Heart left ventricle (tissue), 16 donors: ENCODE measurements at regions of chr12 and their contacts with region 1.

Region 1: DNA sequence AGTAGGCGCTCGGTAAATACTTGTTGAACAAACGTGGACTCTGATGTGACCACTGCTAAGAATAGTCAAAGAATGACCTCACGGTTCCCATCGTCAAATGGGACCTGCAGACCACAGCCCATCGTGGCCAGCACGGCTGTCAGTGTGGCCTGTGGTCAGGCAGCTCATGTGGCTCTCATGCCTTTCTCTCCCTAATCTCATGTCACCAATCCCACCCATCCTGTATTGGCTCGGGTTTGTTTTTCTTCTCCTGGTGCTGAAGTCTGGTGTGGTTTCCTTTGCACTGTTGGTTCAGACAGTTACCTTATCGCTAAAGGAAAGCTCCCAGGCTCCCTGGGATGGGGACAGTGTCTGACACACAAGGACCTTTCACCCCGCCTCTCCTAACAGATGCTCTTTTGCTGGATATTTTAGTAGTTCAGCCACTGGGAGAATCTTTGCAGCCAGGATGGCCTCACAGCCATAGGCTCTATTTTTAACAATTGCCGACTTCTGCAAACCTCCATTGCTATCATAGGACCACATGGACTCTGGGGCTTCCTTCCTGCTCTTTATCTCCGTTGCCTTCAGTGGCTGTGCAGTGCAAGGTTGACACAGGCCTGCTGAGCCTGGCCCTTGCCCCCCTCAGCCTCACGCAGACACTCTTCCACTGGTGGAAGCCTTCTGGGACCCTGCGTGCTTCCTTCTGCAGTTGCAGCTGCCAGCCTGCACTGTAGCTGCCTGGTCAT is 293.1 kb upstream of the FKBP4 start:
- DNase-seq: peak in 4 of 5 donors; percentile 52 to 70 (median 62)
- ATAC-seq: peak; percentile 63 to 83 (median 68)
- H3K4me3 ChIP-seq: no peak overlapping the region
- H3K27ac ChIP-seq: peak overlapping the region; percentile 18 to 93 (median 80)
- H3K4me1 ChIP-seq: peaks cover 10 to 63% (median 43%) of the 10 kb centered on the region in 12 donors
- H3K27me3 ChIP-seq: no peaks in the 10 kb centered on the region
- CTCF ChIP-seq: no peak
- POLR2A ChIP-seq: no peak

Region 2: GRCh38 chr12:2324387-2324786 is 177.2 kb before region 1 on chr12:
- intact Hi-C with region 1: loop called in 2 of 10 experiments (anchors 10 kb)
- DNase-seq: peak in 1 of 5 donors; percentile 36
- ATAC-seq: peak in 3 of 4 donors; percentile 10 to 20 (median 19)
- H3K4me3 ChIP-seq: no peak overlapping the region
- H3K27ac ChIP-seq: peak overlapping the region in 11 of 12 donors; percentile 46 to 86 (median 69)
- H3K4me1 ChIP-seq: peaks cover 8 to 79% (median 59%) of the 10 kb centered on the region in 12 donors
- H3K27me3 ChIP-seq: no peaks in the 10 kb centered on the region
- CTCF ChIP-seq: no peak
- POLR2A ChIP-seq: no peak

Region 3: GRCh38 chr12:2395354-2395977 is 106.2 kb before region 1 on chr12:
- intact Hi-C with region 1: loop called in 1 of 10 experiments (anchors 10 kb)
- DNase-seq: peak in 4 of 5 donors; percentile 42 to 73 (median 50)
- ATAC-seq: no peak
- H3K4me3 ChIP-seq: no peak overlapping the region
- H3K27ac ChIP-seq: peak overlapping the region in 11 of 12 donors; percentile 12 to 77 (median 47)
- H3K4me1 ChIP-seq: peaks cover 3 to 65% (median 30%) of the 10 kb centered on the region in 12 donors
- H3K27me3 ChIP-seq: no peaks in the 10 kb centered on the region
- CTCF ChIP-seq: peak; percentile 65 to 86 (median 78)
- POLR2A ChIP-seq: no peak

Region 4: GRCh38 chr12:2451025-2451424 is 50.6 kb before region 1 on chr12:
- intact Hi-C with region 1: loop called in 1 of 10 experiments (anchors 5 kb)
- DNase-seq: no peak
- ATAC-seq: no peak
- H3K4me3 ChIP-seq: peak overlapping the region in 1 of 12 donors; percentile 36
- H3K27ac ChIP-seq: peak overlapping the region in 6 of 12 donors; percentile 19 to 67 (median 40)
- H3K4me1 ChIP-seq: peaks cover 0 to 35% (median 13%) of the 10 kb centered on the region in 12 donors
- H3K27me3 ChIP-seq: no peaks in the 10 kb centered on the region
- CTCF ChIP-seq: no peak
- POLR2A ChIP-seq: no peak

Region 5: GRCh38 chr12:2462087-2462486 is 39.5 kb before region 1 on chr12:
- intact Hi-C with region 1: no loop called
- DNase-seq: no peak
- ATAC-seq: peak in 1 of 4 donors; percentile 3
- H3K4me3 ChIP-seq: no peak overlapping the region
- H3K27ac ChIP-seq: no peak overlapping the region
- H3K4me1 ChIP-seq: peaks cover 4 to 33% (median 11%) of the 10 kb centered on the region in 12 donors
- H3K27me3 ChIP-seq: no peaks in the 10 kb centered on the region
- CTCF ChIP-seq: no peak
- POLR2A ChIP-seq: no peak

Region 6: DNA sequence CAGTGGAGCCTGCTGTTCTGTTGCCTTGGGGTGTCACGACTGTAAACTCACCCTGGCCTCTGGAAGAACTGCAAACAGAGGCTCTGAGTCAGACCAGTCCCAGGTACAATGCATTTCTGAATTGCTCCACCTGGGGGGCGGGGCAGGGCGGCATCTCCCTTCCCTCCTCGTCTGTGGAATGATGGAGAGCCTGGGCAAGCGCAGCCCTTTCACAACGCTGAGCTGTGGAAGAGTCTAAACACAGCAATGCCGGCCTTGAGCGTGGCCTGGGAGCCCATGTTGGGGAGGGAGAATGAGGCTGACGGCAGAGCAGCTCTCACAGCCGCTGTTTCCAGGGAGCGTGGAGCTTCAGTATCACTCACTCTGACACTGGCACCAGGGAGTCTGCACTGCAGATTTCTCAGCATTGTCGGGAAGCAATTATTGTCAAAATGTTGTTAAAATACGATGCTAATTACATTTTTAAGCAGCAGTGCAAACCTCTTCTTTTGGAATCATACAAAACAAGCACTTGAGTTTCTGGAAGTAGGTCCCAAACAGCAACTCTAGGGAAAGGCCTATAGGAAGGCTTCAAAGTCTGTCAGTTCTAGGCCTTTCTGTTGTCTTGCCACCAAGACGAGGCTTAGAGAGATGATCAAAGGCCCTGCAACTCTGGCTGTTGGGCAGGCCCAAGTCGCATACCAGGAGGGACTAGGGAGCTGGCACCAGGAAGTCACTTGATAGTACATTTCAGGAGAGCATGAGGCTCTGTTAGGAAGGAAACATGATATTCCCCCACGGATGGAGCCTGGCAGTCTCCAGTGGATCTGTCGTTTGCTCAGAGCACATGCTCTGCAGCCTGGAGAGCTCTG is 49.2 kb after region 1 on chr12:
- intact Hi-C with region 1: loop called in 1 of 10 experiments (anchors 10 kb)
- DNase-seq: no peak
- ATAC-seq: peak in 2 of 4 donors; percentile 34 to 49
- H3K4me3 ChIP-seq: no peak overlapping the region
- H3K27ac ChIP-seq: peak overlapping the region in 2 of 12 donors; percentile 25 to 34
- H3K4me1 ChIP-seq: peaks cover 0 to 45% (median 16%) of the 10 kb centered on the region in 12 donors
- H3K27me3 ChIP-seq: no peaks in the 10 kb centered on the region
- CTCF ChIP-seq: no peak
- POLR2A ChIP-seq: no peak